ENCODE measurements at regions of chr10 and their contacts with region 1.

Region 1: DNA sequence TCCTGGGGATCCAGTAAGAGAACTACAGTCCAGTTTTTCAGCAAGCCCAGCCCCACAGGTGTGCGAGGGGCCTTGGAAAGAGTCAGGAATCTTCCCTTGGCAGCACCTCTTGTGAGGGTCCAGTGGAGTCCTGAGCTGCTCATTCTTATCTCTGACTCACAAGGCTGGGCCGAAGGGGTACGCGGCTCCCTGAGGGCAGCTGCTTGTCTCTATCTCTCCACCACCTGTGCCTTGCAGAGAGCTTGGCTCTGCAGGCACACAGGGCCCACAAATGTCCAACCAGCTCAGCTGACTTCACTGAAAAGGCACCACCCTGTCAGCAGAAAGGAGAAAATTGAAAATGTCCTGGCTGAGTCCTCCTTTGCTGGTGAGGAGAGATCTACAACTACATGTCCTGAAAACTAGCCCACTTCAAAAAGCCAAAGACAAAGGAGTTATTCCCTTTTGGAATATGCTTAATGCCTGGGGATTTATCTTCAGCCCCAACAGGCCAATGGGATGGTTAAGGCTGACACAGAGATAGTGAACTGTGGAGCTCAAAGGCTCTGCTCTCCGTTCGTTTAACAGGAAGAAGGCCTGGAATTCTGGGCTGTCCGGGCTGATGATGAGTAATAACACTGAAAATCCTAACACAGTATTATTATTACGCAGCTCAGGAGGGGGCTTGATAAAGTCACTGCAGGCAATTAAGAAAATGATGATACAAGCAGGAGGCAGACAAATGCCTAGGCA is 23.4 kb downstream of the UROS start:
- DNase-seq: no peak
- ATAC-seq: no peak
- H3K4me3 ChIP-seq: no peak overlapping the region
- H3K27ac ChIP-seq: no peak overlapping the region
- H3K4me1 ChIP-seq: peaks cover 0 to 10% (median 1%) of the 10 kb centered on the region in 12 donors
- H3K27me3 ChIP-seq: no peaks in the 10 kb centered on the region
- CTCF ChIP-seq: no peak
- POLR2A ChIP-seq: no peak

Region 2: GRCh38 chr10:124975977-124976514 is 823.6 kb before region 1 on chr10:
- intact Hi-C with region 1: loop called in 1 of 10 experiments (anchors 10 kb)
- DNase-seq: no peak
- ATAC-seq: peak in 1 of 4 donors; percentile 49
- H3K4me3 ChIP-seq: no peak overlapping the region
- H3K27ac ChIP-seq: no peak overlapping the region
- H3K4me1 ChIP-seq: peaks cover 0 to 23% (median 13%) of the 10 kb centered on the region in 12 donors
- H3K27me3 ChIP-seq: no peaks in the 10 kb centered on the region
- CTCF ChIP-seq: no peak
- POLR2A ChIP-seq: no peak

Region 3: GRCh38 chr10:125742465-125742864 is 57.2 kb before region 1 on chr10:
- intact Hi-C with region 1: no loop called
- DNase-seq: no peak
- ATAC-seq: no peak
- H3K4me3 ChIP-seq: no peak overlapping the region
- H3K27ac ChIP-seq: no peak overlapping the region
- H3K4me1 ChIP-seq: no peaks in the 10 kb centered on the region
- H3K27me3 ChIP-seq: no peaks in the 10 kb centered on the region
- CTCF ChIP-seq: peak in 1 of 12 donors; percentile 10
- POLR2A ChIP-seq: no peak

Region 4: DNA sequence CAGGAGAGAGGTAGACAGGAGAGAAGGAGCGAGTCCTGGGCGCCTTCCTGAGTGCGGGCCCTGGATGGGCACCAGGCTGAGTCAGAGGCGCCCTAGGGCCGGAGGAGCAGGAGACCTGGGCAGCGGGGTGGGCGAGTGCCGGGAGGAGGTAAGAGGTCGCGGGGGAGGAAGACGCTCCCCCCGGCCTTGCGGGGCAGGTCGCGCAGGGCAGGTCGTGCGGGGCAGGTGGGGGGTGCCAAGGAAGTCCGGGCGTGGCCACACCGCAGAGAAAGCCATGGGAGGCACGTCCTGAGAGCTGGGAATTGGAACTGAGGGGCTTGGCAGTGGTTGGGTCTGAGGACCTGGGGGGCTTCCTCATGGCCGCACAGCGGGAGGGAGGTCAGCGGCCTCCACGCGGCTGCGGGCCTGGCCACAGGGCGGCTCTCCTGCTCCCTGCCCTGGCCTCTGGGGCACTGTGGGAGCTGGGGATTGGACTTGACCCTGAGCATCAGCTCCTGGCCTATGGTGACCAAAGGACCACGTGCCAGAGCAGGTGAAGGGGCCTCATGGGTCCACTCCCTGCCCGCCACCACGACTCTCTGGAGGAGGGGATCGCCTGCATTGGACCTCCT is 24.9 kb before region 1 on chr10:
- intact Hi-C with region 1: loop called in 1 of 10 experiments (anchors 1 kb)
- DNase-seq: no peak
- ATAC-seq: peak in 1 of 4 donors; percentile 6
- H3K4me3 ChIP-seq: no peak overlapping the region
- H3K27ac ChIP-seq: no peak overlapping the region
- H3K4me1 ChIP-seq: no peaks in the 10 kb centered on the region
- H3K27me3 ChIP-seq: no peaks in the 10 kb centered on the region
- CTCF ChIP-seq: no peak
- POLR2A ChIP-seq: no peak

Measured in heart left ventricle (tissue), 16 donors.